Right ventricle myocardium inferior (tissue), 1 donor: ENCODE measurements at regions of chr7 and their contacts with region 1.

Region 1: DNA sequence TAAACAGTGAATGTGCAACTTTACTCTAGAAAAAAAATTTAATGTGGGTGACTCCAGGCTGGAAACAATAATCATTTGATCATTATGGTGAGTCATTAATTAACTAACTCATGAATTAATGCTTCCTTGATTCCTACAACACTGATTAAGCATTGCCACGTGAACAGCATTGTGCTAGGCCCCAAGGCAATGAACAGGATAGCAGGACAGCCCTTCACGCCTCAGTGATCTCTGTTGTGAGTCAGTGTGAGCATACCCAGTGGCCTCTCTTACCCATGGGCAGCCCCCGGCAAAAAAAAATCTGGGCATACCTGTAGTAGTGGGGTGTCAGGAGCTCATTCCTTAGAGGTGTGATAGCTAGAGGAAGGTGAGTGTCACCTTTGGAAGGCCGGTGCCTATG is 76.0 kb downstream of the DENND2A start:
- DNase-seq: no peak
- ATAC-seq: no peak

Region 2: DNA sequence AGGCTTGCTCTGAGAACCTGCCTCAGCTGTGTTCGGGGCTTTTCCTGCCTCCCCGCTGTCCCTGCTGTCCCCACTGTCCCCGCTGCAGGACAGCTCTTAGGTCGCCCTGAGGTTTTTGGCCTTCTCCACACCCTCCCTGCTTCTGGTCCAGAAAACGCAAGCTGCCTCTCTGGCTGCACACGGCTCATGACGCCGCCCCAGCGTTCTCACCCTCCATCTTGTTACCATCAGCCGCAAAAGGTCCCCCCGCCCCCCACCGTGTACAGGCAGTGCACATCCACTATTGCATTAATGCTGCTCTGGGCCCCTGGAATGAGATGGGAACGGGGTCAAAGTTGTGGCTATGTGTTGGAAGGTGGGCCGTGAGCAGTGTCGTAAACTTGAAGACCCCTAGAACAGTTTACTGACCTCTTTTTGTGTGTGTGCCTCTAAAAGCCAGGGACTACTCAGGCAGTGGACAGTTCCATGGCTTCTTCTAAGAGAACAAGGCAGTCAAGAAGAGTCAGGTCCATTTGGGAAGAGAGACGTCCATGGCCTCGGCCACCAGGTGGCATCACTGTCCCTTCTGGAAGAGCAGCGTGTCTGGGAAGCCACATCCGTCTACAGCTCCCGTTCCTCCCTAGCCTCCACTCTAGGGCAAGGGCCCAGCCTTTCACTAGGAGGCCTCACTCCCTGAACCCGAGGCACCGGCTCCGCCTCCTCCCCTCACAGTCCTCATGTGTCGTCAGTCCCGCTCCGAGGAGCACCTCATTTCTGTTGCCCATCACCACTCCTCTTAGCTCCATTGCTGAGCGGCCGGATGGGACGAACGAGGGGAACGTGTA is 46.9 kb before region 1 on chr7:
- intact Hi-C with region 1: loop called (anchors 2 kb)
- DNase-seq: peak; percentile 93
- ATAC-seq: peak; percentile 91

Region 3: DNA sequence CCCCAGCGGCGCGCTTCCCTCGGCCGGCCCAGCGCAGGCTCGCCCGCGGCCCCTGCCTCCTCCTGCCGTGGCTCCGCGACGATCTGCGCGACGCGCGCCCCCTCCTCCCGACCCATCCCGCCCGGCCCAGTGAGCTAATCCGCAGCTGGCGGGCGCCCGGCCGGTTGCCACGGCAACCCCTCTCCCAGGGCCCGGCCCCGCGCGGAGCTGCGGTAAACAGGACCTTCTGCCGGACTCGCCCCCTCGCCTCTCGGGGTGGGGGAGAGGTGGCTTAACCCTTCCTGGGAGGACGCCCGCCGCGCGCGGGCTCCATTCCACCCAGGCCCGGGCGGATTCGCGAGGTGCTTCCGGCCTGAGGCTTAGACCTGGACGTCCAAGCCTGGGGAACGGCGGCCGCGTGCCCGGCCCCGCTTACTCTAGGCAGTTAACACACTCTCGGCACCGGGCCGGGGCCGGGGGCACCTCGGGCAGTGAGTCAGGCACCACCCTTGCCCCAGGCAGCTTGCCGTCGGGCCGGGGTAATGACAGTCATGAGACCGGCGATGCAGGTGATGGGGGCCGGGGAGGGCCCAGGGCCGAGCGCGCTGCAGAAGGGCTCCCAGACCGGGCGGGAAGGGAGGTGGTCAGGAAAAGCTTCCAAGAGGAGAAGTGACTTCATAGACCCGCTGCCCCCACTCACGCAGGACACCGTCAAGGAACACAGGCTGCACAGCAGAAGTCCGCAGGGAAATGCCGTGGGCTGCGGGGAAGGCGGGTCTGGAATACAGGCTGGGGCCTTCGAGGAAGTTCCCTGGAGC is 76.3 kb after region 1 on chr7 and contains the start of gene DENND2A:
- intact Hi-C with region 1: no loop called
- DNase-seq: peak; percentile 88
- ATAC-seq: peak; percentile 66
- total RNA-seq, gene DENND2A: 15.0 TPM